ENCODE measurements at regions of chr17 and their contacts with region 1.

Region 1: GRCh38 chr17:59565171-59565969 is at the start of gene DHX40:
- H3K4me3 Mint-ChIP-seq: peak within 1 kb of the TSS; percentile 100
- H3K27ac Mint-ChIP-seq: peak within 1 kb of the TSS; percentile 96
- H3K4me1 Mint-ChIP-seq: peaks cover 19% of the 10 kb centered on the region
- H3K27me3 Mint-ChIP-seq: no peaks in the 10 kb centered on the region

Region 2: DNA sequence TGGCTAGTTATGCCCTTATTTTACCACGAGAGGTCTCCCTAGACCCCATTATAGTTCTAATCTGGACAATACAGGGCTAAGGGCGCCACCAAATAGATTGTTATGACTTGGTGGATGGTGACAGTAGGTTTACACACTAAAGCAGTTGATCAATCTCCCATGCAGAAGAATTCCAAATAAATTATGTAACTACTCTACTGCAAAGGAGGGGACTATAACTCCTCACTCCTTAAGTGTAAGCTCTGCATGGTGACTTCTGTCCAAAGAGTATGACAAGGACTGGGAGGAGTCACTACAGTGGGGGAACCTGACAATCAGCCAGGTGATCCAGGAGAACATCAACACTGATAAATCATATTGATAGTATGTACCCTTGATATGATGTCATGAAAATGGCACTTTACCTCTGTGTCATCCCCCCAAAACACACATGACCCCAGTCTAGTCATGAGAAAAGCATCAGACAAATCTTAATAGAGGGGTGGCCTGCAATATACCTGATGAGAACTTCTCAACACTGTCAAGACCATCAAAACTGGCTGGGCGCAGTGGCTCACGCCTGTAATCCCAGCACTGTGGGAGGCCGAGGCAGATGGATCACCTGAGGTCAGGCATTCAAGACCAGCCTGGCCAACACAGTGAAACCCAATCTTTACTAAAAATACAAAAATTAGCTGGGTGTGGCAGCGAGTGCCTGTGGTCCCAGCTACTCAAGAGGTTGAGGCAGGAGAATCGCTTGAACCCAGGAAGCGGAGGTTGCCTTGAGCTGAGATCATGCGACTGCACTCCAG is 254.0 kb before region 1 on chr17:
- intact Hi-C with region 1: loop called (anchors 10 kb)
- H3K4me3 Mint-ChIP-seq: no peak overlapping the region
- H3K27ac Mint-ChIP-seq: peak overlapping the region; percentile 30
- H3K4me1 Mint-ChIP-seq: peaks cover 15% of the 10 kb centered on the region
- H3K27me3 Mint-ChIP-seq: no peaks in the 10 kb centered on the region

Region 3: DNA sequence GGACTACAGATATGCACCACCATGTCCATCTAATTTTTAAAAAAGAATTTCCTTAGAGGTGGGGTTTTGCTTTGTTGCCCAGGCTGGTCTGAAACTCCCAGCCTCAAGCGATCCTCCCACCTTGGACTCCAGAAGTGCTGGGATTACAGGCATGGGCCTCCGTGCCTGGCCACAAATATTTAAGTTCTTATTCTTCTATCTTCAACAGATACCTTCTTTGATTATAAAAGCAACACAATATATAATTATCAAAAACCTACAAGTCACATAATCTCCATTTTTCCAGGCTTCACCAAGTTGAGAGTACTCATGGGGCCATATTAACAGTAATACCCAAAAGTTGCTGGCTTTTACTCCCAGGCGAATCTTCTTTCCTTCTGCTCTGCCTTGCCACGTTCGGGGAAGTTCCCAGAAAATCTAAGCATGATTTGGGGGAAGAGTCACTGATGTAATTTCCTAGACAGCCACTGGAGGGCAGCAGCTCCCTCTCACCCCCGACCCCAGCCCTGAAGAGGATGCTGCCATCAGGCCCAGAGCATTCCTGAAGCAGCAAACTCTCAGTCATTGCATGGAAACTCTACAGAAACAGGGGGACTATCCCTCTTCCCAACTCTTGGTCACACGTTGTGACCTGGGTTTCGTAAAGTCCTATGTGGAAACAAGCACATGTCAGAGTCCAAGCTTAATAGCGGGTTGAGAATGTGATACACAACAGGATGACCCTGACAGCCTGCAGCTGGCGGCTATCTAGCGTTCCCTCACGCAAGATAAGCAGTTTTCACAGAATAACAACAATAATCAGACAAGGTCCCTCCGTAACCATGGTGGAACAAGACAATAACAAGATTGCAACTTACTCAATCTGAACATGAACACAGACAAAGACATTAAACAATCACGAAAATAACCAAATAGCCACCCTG is 43.9 kb before region 1 on chr17:
- intact Hi-C with region 1: loop called (anchors 1 kb)
- H3K4me3 Mint-ChIP-seq: no peak overlapping the region
- H3K27ac Mint-ChIP-seq: peak overlapping the region; percentile 5
- H3K4me1 Mint-ChIP-seq: peaks cover 31% of the 10 kb centered on the region
- H3K27me3 Mint-ChIP-seq: no peaks in the 10 kb centered on the region